WTC11 (cell line): ENCODE measurements at regions of chr1 and their contacts with region 1.

Region 1: GRCh38 chr1:86965012-86965826 is 50.8 kb downstream of the HS2ST1 start:
- DNase-seq: no peak
- ATAC-seq: peak; percentile 92
- H3K4me3 Mint-ChIP-seq: no peak overlapping the region
- H3K27ac Mint-ChIP-seq: peak overlapping the region; percentile 46; the same call in 1 of the 2 replicates
- H3K4me1 Mint-ChIP-seq: peaks cover 10% of the 10 kb centered on the region; the same call in 1 of the 2 replicates
- H3K27me3 Mint-ChIP-seq: no peaks in the 10 kb centered on the region
- CTCF ChIP-seq: peak; percentile 43; the same call in 1 of the 2 replicates

Region 2: GRCh38 chr1:86833461-86834215 is 131.6 kb before region 1 on chr1:
- CTCF ChIA-PET with region 1: interaction called, 17 read pairs
- POLR2A ChIA-PET with region 1: no interaction called
- DNase-seq: peak; percentile 73
- ATAC-seq: peak; percentile 98
- H3K4me3 Mint-ChIP-seq: no peak overlapping the region
- H3K27ac Mint-ChIP-seq: peak overlapping the region; percentile 52; the same call in 1 of the 2 replicates
- H3K4me1 Mint-ChIP-seq: peaks cover 5% of the 10 kb centered on the region
- H3K27me3 Mint-ChIP-seq: no peaks in the 10 kb centered on the region
- CTCF ChIP-seq: peak; percentile 35; the same call in 1 of the 2 replicates

Region 3: DNA sequence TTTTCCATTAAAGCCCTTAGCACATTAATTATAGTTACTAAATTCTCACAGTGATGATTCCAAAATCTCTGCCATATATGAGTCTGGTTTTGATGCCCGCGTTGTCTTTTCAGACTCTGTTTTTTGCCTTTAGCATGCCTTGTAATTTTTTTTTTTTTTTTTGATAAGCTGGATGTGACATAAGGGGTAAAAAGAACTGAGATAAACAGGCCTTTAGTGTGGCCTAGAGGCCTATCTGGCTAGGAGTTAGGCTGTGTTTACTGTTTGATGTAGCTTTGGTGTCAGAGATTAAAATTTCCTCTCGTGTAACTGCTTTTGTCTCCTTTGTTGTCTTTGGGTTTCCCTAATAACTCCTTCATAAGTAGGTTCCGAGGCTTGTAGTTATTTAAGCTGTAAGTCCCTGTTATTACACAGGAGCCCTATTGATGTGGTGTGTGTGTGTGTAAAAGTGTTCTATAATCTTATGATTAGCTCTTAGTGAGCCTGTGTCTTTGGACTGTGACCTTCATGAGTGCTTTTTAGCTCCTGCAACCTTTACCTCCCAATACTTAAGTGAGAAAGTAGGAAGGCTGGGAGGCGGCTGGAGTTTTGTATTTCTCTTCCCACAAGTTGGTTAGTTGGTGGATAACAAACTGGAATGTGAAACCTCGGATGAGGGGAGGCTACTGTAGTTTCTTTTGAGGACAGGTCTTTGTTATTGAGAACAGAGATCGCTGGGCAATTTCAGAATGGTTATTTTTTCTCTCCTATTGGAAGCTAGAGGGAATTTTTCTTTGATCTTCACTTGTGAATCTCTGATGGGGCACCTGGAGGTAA is 31.4 kb before region 1 on chr1:
- CTCF ChIA-PET with region 1: interaction called, 10 read pairs
- POLR2A ChIA-PET with region 1: no interaction called
- DNase-seq: no peak
- ATAC-seq: peak; percentile 74
- H3K4me3 Mint-ChIP-seq: peak overlapping the region; percentile 58
- H3K27ac Mint-ChIP-seq: peak overlapping the region; percentile 99
- H3K4me1 Mint-ChIP-seq: peaks cover 55% of the 10 kb centered on the region
- H3K27me3 Mint-ChIP-seq: no peaks in the 10 kb centered on the region
- CTCF ChIP-seq: no peak

Region 4: DNA sequence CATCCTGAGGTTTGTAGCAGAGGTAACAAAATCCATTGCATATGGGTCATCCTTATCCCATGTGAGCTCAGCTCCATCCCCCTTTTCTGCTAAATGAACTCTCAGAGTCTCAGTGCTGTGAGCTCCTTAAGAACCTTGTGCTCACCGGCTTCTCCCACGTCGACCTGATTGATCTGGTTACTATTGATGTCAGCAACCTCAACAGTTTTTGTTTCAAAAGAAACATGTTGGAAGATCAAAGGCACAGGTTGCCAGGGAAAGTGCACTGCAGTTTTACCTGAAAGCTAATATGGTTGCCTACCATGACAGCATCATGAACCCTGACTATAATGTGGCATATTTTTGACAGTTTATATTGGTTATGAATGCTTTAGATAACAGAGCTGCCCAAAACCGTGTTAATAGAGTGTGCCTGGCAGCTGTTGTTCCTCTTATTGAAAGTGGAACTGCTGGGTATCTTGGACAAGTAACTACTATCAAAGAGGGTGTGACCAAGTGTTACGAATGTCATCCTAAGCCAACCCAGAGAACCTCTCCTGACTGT is 80.6 kb after region 1 on chr1:
- CTCF ChIA-PET with region 1: no interaction called
- POLR2A ChIA-PET with region 1: no interaction called
- DNase-seq: no peak
- ATAC-seq: no peak
- H3K4me3 Mint-ChIP-seq: no peak overlapping the region
- H3K27ac Mint-ChIP-seq: no peak overlapping the region
- H3K4me1 Mint-ChIP-seq: no peaks in the 10 kb centered on the region
- H3K27me3 Mint-ChIP-seq: no peaks in the 10 kb centered on the region
- CTCF ChIP-seq: no peak